Activated CD4-positive, alpha-beta memory T cell treated with anti-CD3 and anti-CD28 coated beads, Interleukin-2, amount 10 ng/mL, durations not matched to agents 7 days and 5 days (primary cell): ENCODE measurements at regions of chr2 and their contacts with region 1.

Region 1: GRCh38 chr2:98465456-98466226 is 21.0 kb downstream of the INPP4A start:
- DNase-seq: peak; percentile 85
- H3K4me3 Mint-ChIP-seq: peak overlapping the region; percentile 72
- H3K27ac Mint-ChIP-seq: peak overlapping the region; percentile 100
- H3K4me1 Mint-ChIP-seq: peaks cover 93% of the 10 kb centered on the region
- H3K27me3 Mint-ChIP-seq: no peaks in the 10 kb centered on the region

Region 2: DNA sequence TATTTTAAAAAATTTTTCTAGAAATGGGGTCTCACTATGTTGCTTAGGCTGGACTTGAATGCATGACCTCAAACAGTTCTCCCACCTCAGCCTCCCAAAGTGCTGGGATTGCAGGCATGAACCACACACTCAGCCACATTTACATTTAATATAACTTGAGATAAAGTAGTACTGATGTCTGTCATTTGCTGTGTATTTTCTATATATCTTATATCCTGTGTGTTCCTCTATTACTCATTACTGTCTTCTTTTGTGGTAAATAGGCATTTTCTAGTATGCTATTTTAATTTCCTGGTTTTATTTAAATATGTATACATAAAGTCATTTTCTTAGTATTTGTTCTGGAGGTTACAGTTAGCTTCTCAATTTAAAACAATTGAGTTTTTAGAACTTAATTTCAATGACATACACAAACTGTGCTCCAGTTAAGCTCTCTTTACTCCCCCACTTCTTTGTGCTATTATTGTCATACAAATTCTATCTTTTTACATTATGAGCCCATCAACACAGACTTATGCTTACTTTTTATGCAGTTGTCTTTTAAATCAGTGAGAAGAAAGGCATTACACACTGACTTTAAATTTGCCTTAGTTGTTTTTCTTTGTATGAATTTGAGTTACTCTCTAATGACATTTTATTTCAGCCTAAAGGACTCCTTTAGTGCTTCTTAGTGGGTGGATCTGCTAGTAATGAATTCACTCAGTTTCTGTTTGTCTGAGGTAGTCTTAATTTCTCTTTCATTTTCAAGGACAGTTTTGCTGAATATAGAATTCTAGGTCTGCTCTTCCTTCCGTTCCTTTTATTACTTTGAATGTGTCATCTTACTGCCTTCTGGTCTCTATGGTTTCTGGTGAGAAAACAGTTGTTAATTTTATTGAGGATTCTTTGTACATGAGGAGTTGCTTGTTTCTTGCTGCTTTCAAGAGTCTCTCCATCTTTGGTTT is 27.2 kb before region 1 on chr2:
- CTCF ChIA-PET with region 1: interaction called, 3 read pairs
- POLR2A ChIA-PET with region 1: interaction called, 28 read pairs
- DNase-seq: no peak
- H3K4me3 Mint-ChIP-seq: peak overlapping the region; percentile 53
- H3K27ac Mint-ChIP-seq: peak overlapping the region; percentile 91
- H3K4me1 Mint-ChIP-seq: peaks cover 44% of the 10 kb centered on the region
- H3K27me3 Mint-ChIP-seq: no peaks in the 10 kb centered on the region

Region 3: DNA sequence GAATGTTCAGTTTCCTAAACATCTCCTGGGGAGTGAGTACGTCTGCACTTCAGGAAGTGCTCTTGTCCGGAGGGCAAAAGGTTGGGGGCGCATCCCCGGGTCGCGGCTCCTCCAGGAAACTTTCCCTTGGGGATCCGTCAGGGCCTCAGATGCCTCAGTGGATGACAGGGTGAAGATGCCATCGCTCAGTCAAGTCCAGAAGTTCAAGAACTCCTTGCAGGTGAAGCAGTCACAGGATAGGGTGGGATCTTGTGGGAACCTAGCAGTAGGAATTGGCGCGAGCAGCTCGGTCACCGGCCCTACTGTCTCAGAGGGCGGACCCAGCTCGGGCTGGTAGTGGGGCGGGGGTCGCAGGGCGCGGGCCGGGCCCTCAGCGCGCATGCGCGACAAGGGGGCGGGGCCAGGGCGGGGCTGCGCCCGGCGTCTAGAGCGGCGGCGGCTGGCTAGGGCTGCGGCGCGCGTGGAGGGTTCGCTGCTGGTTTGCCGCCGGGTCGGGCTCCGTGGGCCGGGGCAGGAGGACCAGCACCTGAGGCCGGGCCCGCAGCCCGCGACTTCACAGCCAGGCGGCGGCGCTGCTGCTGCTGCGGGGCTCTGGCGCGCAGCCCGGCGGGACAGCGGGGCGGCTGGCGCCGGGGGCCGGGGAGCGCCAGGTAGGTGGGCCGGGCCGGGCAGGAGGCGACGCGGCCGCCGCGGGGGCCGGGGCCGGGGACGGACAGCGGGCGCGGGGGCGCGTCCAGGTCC is 21.0 kb before region 1 on chr2 and contains the start of gene INPP4A:
- CTCF ChIA-PET with region 1: interaction called, 28 read pairs
- POLR2A ChIA-PET with region 1: interaction called, 471 read pairs
- DNase-seq: peak; percentile 81
- H3K4me3 Mint-ChIP-seq: peak within 1 kb of the TSS; percentile 88
- H3K27ac Mint-ChIP-seq: peak within 1 kb of the TSS; percentile 92
- H3K4me1 Mint-ChIP-seq: peaks cover 52% of the 10 kb centered on the region
- H3K27me3 Mint-ChIP-seq: no peaks in the 10 kb centered on the region
- total RNA-seq, gene INPP4A: 123 to 127 TPM

Region 4: DNA sequence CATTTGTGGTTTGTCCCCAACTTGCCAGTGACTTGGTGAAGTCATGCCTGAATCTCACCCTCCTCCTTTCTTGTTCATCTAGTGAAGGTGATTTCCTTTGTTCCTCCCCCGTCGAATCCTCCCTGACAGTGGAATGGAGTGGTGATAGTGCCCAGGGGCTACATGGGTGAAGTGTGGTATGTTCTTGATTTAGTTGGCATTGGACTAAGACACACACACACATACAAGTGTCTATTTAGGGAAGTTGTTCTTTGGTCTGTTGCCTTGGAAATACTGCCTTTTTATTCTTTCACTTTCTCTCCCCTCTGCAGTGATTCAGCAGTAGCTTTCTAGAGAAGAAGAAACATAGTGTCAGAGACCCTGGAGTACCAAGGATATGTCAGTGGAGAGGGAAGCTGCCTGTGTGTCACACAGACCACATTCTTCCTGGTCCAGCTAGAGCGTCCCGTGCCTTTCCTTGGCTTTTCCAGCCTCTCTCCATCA is 10.1 kb before region 1 on chr2:
- CTCF ChIA-PET with region 1: interaction called, 33 read pairs
- POLR2A ChIA-PET with region 1: interaction called, 471 read pairs
- DNase-seq: no peak
- H3K4me3 Mint-ChIP-seq: peak overlapping the region; percentile 61
- H3K27ac Mint-ChIP-seq: peak overlapping the region; percentile 85
- H3K4me1 Mint-ChIP-seq: peaks cover 97% of the 10 kb centered on the region
- H3K27me3 Mint-ChIP-seq: no peaks in the 10 kb centered on the region

Region 5: GRCh38 chr2:98479959-98480524 is 14.4 kb after region 1 on chr2:
- CTCF ChIA-PET with region 1: interaction called, 56 read pairs
- POLR2A ChIA-PET with region 1: interaction called, 500 read pairs
- DNase-seq: peak; percentile 56
- H3K4me3 Mint-ChIP-seq: peak overlapping the region; percentile 18
- H3K27ac Mint-ChIP-seq: peak overlapping the region; percentile 95
- H3K4me1 Mint-ChIP-seq: peaks cover 100% of the 10 kb centered on the region
- H3K27me3 Mint-ChIP-seq: no peaks in the 10 kb centered on the region